Uterus (tissue), 4 donors: ENCODE measurements at regions of chr11 and their contacts with region 1.

Region 1: GRCh38 chr11:117843666-117844484 is 19.3 kb upstream of the FXYD2 start:
- DNase-seq: peak; percentile 85 to 86
- H3K4me3 ChIP-seq: no peak overlapping the region
- H3K27ac ChIP-seq: peak overlapping the region in 1 of 2 donors; percentile 12
- H3K4me1 ChIP-seq: no peaks in the 10 kb centered on the region
- H3K27me3 ChIP-seq: no peaks in the 10 kb centered on the region
- CTCF ChIP-seq: peak; percentile 98 to 100 (median 99)
- POLR2A ChIP-seq: no peak

Region 2: GRCh38 chr11:117946842-117947526 is 103.1 kb after region 1 on chr11:
- intact Hi-C with region 1: loop called (anchors 2 kb)
- DNase-seq: peak; percentile 92 to 94
- H3K4me3 ChIP-seq: no peak overlapping the region
- H3K27ac ChIP-seq: peak overlapping the region in 1 of 2 donors; percentile 3
- H3K4me1 ChIP-seq: no peaks in the 10 kb centered on the region
- H3K27me3 ChIP-seq: no peaks in the 10 kb centered on the region
- CTCF ChIP-seq: peak; percentile 94 to 98 (median 96)
- POLR2A ChIP-seq: no peak